SK-N-SH (cell line): ENCODE measurements at regions of chr12 and their contacts with region 1.

Region 1: GRCh38 chr12:108193917-108194316 is 64.8 kb downstream of the WSCD2 start:
- DNase-seq: peak; percentile 69
- H3K4me3 ChIP-seq: no peak overlapping the region
- H3K27ac ChIP-seq: no peak overlapping the region; a peak in 1 of 4 replicates
- H3K4me1 ChIP-seq: peaks cover 0 to 29% of the 10 kb centered on the region in 2 experiments; a peak in 2 of 4 replicates
- H3K27me3 ChIP-seq: no peaks in the 10 kb centered on the region
- CTCF ChIP-seq: peak; percentile 62
- EP300 ChIP-seq: no peak
- RAD21 ChIP-seq: peak; percentile 81

Region 2: DNA sequence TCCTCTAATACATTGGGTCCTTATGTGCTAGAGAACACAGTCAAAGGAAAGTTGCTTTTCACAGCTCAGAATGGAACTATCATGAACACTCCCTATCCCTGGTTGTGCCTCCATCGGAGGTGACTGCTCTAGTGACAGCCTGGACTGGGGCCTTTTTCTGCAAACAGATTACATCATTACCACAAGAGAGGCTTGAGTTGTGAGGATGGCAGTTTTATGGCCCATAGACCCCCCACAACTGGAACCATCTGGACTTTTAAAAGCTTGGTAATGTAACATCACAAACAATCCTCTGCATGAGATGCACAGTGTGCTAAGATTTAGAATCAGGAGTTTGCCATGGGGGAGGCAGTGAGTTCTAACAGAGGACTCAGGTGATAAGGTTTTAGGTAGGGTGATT is 111.4 kb before region 1 on chr12:
- CTCF ChIA-PET with region 1: no interaction called
- POLR2A ChIA-PET with region 1: no interaction called
- DNase-seq: no peak
- H3K4me3 ChIP-seq: no peak overlapping the region
- H3K27ac ChIP-seq: no peak overlapping the region
- H3K4me1 ChIP-seq: no peaks in the 10 kb centered on the region; a peak in 1 of 4 replicates
- H3K27me3 ChIP-seq: no peaks in the 10 kb centered on the region
- CTCF ChIP-seq: no peak
- EP300 ChIP-seq: no peak
- RAD21 ChIP-seq: no peak

Region 3: DNA sequence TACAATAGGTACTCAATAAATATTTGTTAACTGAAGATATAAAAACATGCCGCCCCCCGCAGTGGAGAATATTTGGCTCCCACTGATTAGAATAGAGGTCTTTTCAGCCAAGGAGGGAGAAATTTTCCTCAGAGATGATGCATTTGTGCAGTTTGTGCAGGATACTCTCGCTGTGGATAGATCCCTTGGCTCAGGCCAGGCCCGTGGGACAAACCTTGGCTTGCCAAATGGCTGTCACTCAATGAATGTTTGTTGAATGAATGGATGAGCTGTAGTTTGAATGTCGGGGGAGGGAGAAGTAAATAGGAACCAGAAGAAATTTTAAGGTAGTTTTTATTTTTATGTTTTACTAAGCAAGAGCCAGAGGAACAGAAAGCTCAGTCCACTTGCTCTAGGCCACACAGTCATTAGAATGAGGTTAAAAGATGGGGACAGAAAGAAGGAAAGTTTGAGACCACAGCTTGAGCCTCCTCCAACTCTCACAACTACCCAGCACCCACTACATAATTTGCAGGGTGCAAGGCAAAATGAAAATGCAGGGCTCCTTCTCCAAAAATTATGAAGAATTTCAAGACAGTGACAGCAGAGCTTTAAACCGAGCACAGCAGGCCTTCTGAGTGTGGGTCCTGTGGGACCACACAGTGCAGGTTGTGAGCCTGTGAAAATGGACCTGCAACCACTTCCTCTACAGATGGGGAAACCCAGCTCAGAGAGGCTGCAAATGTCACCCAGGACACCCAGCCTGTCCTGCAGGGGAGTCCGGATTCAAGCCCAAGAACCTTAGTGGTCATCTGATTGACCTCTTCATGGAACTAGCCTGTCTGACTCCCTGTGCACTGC is 13.4 kb before region 1 on chr12:
- CTCF ChIA-PET with region 1: interaction called, 10 read pairs
- POLR2A ChIA-PET with region 1: no interaction called
- DNase-seq: no peak
- H3K4me3 ChIP-seq: no peak overlapping the region
- H3K27ac ChIP-seq: no peak overlapping the region
- H3K4me1 ChIP-seq: peaks cover 0 to 3% of the 10 kb centered on the region in 2 experiments; a peak in 1 of 4 replicates
- H3K27me3 ChIP-seq: no peaks in the 10 kb centered on the region
- CTCF ChIP-seq: no peak
- EP300 ChIP-seq: no peak
- RAD21 ChIP-seq: no peak

Region 4: DNA sequence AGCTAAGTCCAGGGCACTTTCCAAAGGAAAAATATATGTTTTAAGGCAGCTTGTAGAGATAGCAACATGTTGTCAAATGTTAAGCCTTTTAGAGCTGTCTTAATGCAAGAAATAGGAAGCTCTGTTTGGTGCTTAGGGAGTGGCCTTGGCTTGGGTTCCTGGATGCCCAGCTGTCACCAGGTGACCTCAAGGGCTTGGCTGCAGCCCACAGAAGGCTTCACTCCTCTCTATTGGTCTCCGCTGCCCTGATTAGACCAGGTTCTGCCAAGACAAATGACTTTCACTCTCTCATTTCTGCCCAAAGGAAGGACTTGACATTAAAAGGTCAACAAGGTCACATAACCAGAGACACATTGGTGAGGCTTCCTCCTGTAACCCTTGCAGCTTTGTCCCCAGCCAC is 11.9 kb after region 1 on chr12:
- CTCF ChIA-PET with region 1: interaction called, 10 read pairs
- POLR2A ChIA-PET with region 1: interaction called, 4 read pairs
- DNase-seq: no peak
- H3K4me3 ChIP-seq: no peak overlapping the region
- H3K27ac ChIP-seq: no peak overlapping the region
- H3K4me1 ChIP-seq: peaks cover 0 to 13% of the 10 kb centered on the region in 2 experiments; a peak in 1 of 4 replicates
- H3K27me3 ChIP-seq: no peaks in the 10 kb centered on the region
- CTCF ChIP-seq: no peak
- EP300 ChIP-seq: no peak
- RAD21 ChIP-seq: no peak

Region 5: GRCh38 chr12:108213871-108214445 is 20.0 kb after region 1 on chr12:
- CTCF ChIA-PET with region 1: interaction called, 15 read pairs
- POLR2A ChIA-PET with region 1: interaction called, 4 read pairs
- DNase-seq: no peak
- H3K4me3 ChIP-seq: no peak overlapping the region
- H3K27ac ChIP-seq: no peak overlapping the region
- H3K4me1 ChIP-seq: peaks cover 0 to 34% of the 10 kb centered on the region in 2 experiments; a peak in 1 of 4 replicates
- H3K27me3 ChIP-seq: no peaks in the 10 kb centered on the region
- CTCF ChIP-seq: no peak
- EP300 ChIP-seq: no peak
- RAD21 ChIP-seq: no peak